ENCODE measurements at regions of chr2 and their contacts with region 1.

Region 1: DNA sequence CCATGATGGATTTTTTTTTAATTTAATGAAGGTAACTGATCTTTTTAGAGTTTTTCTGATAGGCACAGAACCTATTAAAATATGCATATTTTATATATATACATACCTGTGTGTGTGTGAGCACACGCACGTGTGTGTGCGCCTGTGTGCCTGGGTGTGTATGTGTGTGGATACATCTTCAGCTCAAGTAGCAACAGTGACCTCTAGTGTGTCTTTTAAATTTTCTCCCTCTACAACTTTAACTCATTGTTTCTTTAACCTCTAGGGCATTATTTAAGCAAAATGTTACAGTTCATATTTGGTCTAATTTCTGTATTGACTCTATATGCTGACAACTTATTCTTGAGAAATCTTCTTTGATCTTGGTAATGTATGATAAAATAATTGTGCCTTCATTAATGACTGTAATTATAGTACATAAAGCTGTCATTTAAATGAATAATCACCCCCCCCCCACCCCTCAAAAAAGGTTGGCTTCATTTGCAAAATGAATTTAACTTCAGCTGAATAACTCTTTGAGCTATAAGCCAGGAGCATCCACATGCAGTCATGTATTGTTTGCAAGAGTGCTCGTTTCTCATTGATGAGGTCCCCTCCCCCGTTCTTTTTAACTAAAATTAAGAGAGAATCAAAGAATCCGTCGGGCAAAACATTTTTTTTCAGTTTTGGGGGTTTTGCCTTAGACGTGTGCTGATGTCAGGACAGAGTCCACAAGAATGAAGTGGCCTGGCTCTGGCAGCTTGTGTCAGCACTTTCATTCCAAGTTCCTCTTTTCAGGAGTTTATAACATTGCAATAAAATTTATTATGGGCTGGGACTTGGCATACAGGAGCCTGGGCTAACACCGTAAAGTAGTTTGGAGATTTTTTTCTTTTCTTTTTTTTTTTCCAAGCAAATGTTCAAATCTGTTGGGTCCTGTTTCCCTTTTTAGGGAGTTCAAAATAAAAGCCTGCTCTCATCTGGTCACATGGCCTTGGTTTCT is 80.0 kb downstream of the ETAA1 start:
- DNase-seq: peak; percentile 6
- H3K4me3 Mint-ChIP-seq: no peak overlapping the region
- H3K27ac Mint-ChIP-seq: no peak overlapping the region
- H3K4me1 Mint-ChIP-seq: no peaks in the 10 kb centered on the region
- H3K27me3 Mint-ChIP-seq: no peaks in the 10 kb centered on the region
- CTCF ChIP-seq: peak; percentile 67

Region 2: DNA sequence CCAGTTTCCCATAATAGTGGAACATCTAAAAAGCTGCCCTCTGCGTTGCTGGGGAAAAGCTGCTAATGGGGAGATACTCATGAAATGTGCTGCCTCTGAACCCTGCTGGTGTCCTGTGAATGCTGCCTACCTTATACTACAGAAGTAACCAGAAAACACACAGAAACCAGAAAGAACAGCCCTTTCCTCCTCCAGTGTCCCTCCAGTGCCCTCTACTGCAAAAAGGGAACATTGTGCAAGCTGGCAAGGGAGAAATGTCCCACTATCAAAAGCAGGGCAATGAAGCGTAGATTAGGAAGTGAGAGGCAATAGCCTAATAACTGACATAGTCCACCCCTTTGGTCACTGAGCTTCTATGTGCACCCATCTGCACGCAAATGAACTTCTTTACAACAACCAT is 242.7 kb before region 1 on chr2:
- CTCF ChIA-PET with region 1: no interaction called
- intact Hi-C with region 1: loop called (anchors 2 kb)
- DNase-seq: peak; percentile 22
- H3K4me3 Mint-ChIP-seq: no peak overlapping the region
- H3K27ac Mint-ChIP-seq: no peak overlapping the region
- H3K4me1 Mint-ChIP-seq: peaks cover 33% of the 10 kb centered on the region
- H3K27me3 Mint-ChIP-seq: no peaks in the 10 kb centered on the region
- CTCF ChIP-seq: peak; percentile 28

Region 3: GRCh38 chr2:67277450-67277849 is 199.7 kb before region 1 on chr2:
- CTCF ChIA-PET with region 1: no interaction called
- intact Hi-C with region 1: loop called (anchors 5 kb)
- DNase-seq: peak; percentile 55
- H3K4me3 Mint-ChIP-seq: no peak overlapping the region
- H3K27ac Mint-ChIP-seq: peak overlapping the region; percentile 86
- H3K4me1 Mint-ChIP-seq: peaks cover 13% of the 10 kb centered on the region
- H3K27me3 Mint-ChIP-seq: no peaks in the 10 kb centered on the region
- CTCF ChIP-seq: no peak

Region 4: DNA sequence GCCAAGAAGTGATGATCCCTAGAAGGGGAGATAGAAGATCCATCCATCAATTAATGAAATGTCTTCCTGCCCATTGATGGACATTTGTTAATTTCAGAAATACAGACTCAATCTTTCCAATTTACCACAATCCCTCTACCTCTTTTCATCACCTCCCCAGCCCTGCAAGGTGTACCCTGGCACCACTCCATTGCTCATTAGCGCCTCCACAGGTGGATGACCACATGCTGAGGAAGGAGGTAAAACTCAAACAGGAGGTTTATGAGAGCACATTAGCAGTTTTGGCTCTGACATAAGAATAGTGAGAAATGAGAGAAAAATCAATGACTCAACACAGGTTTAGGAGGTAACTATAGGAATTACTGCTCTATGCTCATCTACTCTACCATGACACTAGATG is 377.7 kb after region 1 on chr2:
- CTCF ChIA-PET with region 1: no interaction called
- intact Hi-C with region 1: no loop called
- DNase-seq: no peak
- H3K4me3 Mint-ChIP-seq: no peak overlapping the region
- H3K27ac Mint-ChIP-seq: no peak overlapping the region
- H3K4me1 Mint-ChIP-seq: no peaks in the 10 kb centered on the region
- H3K27me3 Mint-ChIP-seq: no peaks in the 10 kb centered on the region
- CTCF ChIP-seq: no peak

Measured in Calu3 (cell line).